ENCODE measurements at regions of chr9 and their contacts with region 1.

Region 1: GRCh38 chr9:91177661-91178280 is 183.9 kb downstream of the AUH start:
- DNase-seq: peak; percentile 94
- H3K4me3 Mint-ChIP-seq: peak overlapping the region; percentile 57
- H3K27ac Mint-ChIP-seq: peak overlapping the region; percentile 89
- H3K4me1 Mint-ChIP-seq: peaks cover 50% of the 10 kb centered on the region
- H3K27me3 Mint-ChIP-seq: no peaks in the 10 kb centered on the region
- CTCF ChIP-seq: no peak

Region 2: DNA sequence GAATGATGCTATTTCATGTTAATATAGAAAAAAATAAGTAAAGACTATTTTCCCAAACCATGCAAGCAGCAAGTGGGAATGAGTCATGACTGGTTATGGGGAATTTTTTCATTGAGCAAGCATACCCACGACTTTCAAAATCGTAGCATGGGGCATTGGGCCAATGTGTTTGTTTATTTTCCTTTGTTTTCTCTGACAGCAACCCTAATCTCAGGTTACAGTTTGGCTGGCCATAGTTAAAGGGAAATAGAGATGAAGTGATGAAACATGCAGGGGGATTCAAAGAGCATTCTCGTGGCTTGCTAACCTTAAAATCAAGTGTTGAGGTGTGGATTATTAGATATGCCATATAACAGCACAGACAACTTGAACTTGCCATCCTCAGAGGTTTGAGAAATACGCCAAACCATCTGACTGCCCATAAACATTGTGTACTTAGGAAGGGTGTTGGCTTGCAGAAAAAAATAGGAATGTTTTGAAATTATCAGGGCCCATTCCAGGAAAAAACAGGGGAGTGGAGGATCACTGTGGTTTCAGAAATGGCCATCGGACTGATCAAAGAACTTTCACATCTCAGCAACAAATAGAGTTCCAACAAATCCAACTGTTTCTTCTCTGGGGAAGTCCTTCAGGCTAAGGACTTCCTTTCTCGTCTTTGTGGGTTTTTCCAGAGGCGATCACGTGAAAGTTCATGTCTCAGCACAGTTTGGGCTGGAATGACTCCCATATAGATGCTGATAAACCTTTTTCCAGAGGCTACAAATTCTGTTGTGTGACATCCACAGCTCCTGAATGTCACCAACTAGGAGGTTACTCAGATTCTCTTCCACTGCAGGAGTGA is 117.0 kb before region 1 on chr9:
- CTCF ChIA-PET with region 1: interaction called, 4 read pairs
- POLR2A ChIA-PET with region 1: interaction called, 19 read pairs
- intact Hi-C with region 1: no loop called
- DNase-seq: peak; percentile 99
- H3K4me3 Mint-ChIP-seq: peak overlapping the region; percentile 63
- H3K27ac Mint-ChIP-seq: peak overlapping the region; percentile 98
- H3K4me1 Mint-ChIP-seq: peaks cover 45% of the 10 kb centered on the region
- H3K27me3 Mint-ChIP-seq: no peaks in the 10 kb centered on the region
- CTCF ChIP-seq: no peak

Region 3: DNA sequence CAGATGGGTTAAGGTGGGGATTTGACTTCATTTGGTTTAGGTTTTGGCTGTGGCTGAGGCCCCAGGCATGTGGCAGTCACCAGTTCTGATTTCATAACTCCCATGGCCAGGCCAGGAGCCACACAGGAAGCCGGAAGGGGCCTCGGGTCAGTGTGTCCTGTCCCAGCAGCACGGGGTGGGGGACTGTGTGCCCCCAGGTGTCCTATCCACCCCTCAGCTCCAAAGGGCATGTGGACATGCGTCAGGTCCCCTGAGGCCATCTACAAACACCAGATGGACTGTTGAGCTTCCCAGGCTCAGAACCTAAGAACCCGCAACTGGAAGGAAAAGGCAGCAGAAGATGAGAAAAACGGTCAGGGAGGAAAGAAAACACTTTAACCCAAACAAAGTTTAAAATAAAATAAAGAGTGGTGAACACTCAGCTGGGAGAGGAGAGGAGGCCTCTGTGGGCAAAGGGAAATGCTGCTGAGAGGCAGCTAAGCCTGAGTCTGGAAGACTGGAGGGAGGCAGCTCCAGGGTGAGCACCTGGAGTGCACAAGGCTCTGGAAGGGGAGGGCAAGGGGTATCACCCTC is 76.8 kb before region 1 on chr9:
- CTCF ChIA-PET with region 1: no interaction called
- POLR2A ChIA-PET with region 1: interaction called, 11 read pairs
- intact Hi-C with region 1: no loop called
- DNase-seq: peak; percentile 31
- H3K4me3 Mint-ChIP-seq: peak overlapping the region; percentile 38
- H3K27ac Mint-ChIP-seq: peak overlapping the region; percentile 43
- H3K4me1 Mint-ChIP-seq: peaks cover 34% of the 10 kb centered on the region
- H3K27me3 Mint-ChIP-seq: no peaks in the 10 kb centered on the region
- CTCF ChIP-seq: no peak

Region 4: DNA sequence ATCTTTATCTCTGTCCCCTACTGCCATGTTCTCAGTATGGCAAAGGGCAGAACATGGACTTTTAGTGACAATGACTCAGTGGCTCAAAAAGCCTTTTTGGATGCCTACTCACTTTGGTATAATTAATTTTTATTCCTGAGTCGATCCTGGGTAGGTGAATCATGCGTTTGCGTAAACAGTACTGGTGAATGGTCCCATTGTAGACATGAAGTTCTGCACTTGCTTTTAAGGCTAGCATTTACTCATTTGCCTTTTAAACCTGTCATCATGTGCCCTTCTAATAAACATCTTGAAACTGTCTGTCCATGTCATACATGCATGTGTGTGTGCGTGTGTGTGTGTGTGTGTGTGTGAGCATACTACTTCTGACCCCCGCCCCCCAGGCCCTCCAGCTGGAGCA is 39.0 kb before region 1 on chr9:
- CTCF ChIA-PET with region 1: no interaction called
- POLR2A ChIA-PET with region 1: interaction called, 10 read pairs
- intact Hi-C with region 1: no loop called
- DNase-seq: no peak
- H3K4me3 Mint-ChIP-seq: no peak overlapping the region
- H3K27ac Mint-ChIP-seq: no peak overlapping the region
- H3K4me1 Mint-ChIP-seq: peaks cover 7% of the 10 kb centered on the region
- H3K27me3 Mint-ChIP-seq: no peaks in the 10 kb centered on the region
- CTCF ChIP-seq: no peak

Region 5: GRCh38 chr9:91164724-91165520 is 12.8 kb before region 1 on chr9:
- CTCF ChIA-PET with region 1: no interaction called
- POLR2A ChIA-PET with region 1: interaction called, 34 read pairs
- intact Hi-C with region 1: no loop called
- DNase-seq: peak; percentile 94
- H3K4me3 Mint-ChIP-seq: peak overlapping the region; percentile 6
- H3K27ac Mint-ChIP-seq: peak overlapping the region; percentile 57
- H3K4me1 Mint-ChIP-seq: peaks cover 30% of the 10 kb centered on the region
- H3K27me3 Mint-ChIP-seq: no peaks in the 10 kb centered on the region
- CTCF ChIP-seq: no peak